ENCODE measurements at regions of chr19 and their contacts with region 1.

Region 1: GRCh38 chr19:53103945-53104203 is 652 bp upstream of the ZNF160 start:
- DNase-seq: no peak
- H3K4me3 ChIP-seq: peak overlapping the region; percentile 90
- H3K4me3 Mint-ChIP-seq: peak overlapping the region; percentile 84 to 97 (median 92)
- H3K27ac ChIP-seq: peak overlapping the region; percentile 96
- H3K27ac Mint-ChIP-seq: peak overlapping the region; percentile 86 to 99 (median 96)
- H3K4me1 ChIP-seq: peaks cover 16% of the 10 kb centered on the region
- H3K4me1 Mint-ChIP-seq: peaks cover 31 to 42% (median 32%) of the 10 kb centered on the region in 3 donors
- H3K27me3 ChIP-seq: no peaks in the 10 kb centered on the region
- H3K27me3 Mint-ChIP-seq: peaks cover 0 to under 1% of the 10 kb centered on the region in 2 donors

Region 2: GRCh38 chr19:53157626-53158025 is 53.8 kb after region 1 on chr19:
- CTCF ChIA-PET with region 1: no interaction called
- POLR2A ChIA-PET with region 1: interaction called, 11 read pairs
- DNase-seq: no peak
- H3K4me3 ChIP-seq: peak overlapping the region; percentile 70
- H3K4me3 Mint-ChIP-seq: peak overlapping the region; percentile 67 to 94 (median 85)
- H3K27ac ChIP-seq: peak overlapping the region; percentile 57
- H3K27ac Mint-ChIP-seq: peak overlapping the region in 7 of 8 donors; percentile 39 to 95 (median 72)
- H3K4me1 ChIP-seq: peaks cover 9% of the 10 kb centered on the region
- H3K4me1 Mint-ChIP-seq: peaks cover 19 to 37% (median 19%) of the 10 kb centered on the region in 3 donors
- H3K27me3 ChIP-seq: no peaks in the 10 kb centered on the region
- H3K27me3 Mint-ChIP-seq: peaks cover 0 to 5% of the 10 kb centered on the region in 2 donors

Region 3: GRCh38 chr19:53246498-53246897 is 142.6 kb after region 1 on chr19:
- CTCF ChIA-PET with region 1: no interaction called
- POLR2A ChIA-PET with region 1: no interaction called
- DNase-seq: no peak
- H3K4me3 ChIP-seq: no peak overlapping the region
- H3K4me3 Mint-ChIP-seq: no peak overlapping the region
- H3K27ac ChIP-seq: no peak overlapping the region
- H3K27ac Mint-ChIP-seq: no peak overlapping the region
- H3K4me1 ChIP-seq: no peaks in the 10 kb centered on the region
- H3K4me1 Mint-ChIP-seq: no peaks in the 10 kb centered on the region
- H3K27me3 ChIP-seq: no peaks in the 10 kb centered on the region
- H3K27me3 Mint-ChIP-seq: no peaks in the 10 kb centered on the region

Measured in CD8-positive, alpha-beta memory T cell (primary cell).